ENCODE measurements at regions of chr11 and their contacts with region 1.

Region 1: DNA sequence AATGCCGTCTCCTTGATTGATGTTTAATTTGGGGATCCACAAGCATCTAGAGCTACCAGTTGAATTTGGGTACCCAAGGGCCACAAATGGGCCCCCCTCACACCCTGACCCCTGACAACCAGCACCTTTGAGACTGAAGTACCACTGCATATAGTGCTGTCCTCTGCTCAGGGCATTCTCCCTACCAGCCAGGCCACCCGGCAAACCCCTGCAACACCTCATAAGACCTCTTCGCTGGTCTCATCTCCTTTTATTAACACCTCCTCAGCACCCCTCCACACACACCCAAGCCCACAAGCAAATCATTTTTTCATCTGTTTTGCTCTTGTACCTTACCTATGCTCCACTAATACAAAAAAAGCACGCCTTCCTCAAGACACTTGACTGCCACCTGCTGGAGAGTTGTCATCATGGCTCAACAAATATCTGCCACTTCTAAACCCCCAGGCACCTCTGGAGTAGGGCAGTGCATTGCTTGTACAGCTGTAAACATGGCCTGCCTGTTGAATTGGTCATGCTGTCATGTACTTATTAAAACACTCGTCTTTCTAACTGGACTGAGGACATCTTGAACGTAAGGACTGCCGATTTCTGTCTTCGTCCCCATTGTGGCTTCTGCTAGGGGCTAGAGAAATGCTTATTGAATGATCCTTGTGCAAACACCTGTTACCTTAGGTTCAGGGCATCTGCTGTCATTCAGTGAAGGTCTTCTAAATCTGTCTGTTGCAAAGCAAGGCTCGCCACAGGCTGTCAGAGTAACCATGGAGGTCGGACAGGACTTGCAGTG is 66.5 kb downstream of the BMAL1 start:
- DNase-seq: peak; percentile 58 to 82
- H3K4me3 ChIP-seq: no peak overlapping the region
- H3K4me1 ChIP-seq: no peaks in the 10 kb centered on the region
- H3K27me3 ChIP-seq: no peaks in the 10 kb centered on the region

Region 2: GRCh38 chr11:13210424-13210823 is 133.7 kb before region 1 on chr11:
- in situ Hi-C with region 1: loop called (anchors 10 kb)
- DNase-seq: peak; percentile 39 to 73
- H3K4me3 ChIP-seq: no peak overlapping the region
- H3K4me1 ChIP-seq: peaks cover 7% of the 10 kb centered on the region; the same call in 1 of the 2 replicates
- H3K27me3 ChIP-seq: no peaks in the 10 kb centered on the region